PC-9 (cell line): ENCODE measurements at regions of chr10 and their contacts with region 1.

Region 1: GRCh38 chr10:21432271-21432670 is 93.2 kb downstream of the SKIDA1 start:
- DNase-seq: peak; percentile 57 to 81
- H3K4me3 ChIP-seq: no peak overlapping the region
- H3K27ac ChIP-seq: peak overlapping the region; percentile 82
- H3K4me1 ChIP-seq: peaks cover 22% of the 10 kb centered on the region
- H3K27me3 ChIP-seq: no peaks in the 10 kb centered on the region
- CTCF ChIP-seq: no peak

Region 2: DNA sequence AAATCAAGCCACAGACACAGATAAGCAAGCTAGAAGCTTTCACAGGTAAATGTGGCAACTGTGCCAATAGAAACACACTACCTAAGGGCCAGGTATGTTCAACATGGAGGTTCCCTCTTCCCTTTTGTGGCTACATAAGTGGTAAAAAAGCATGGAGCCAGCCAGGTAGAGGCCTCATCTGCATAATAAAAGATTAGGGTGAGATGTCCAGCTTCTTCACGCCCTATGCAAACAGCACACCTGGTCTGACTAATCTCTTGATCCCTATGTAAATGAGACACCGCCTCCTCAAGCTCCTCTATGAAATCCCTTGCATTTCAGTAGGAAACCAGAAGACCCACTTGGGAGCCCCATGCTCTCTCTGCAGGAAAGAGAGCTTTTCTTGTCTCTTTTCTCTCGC is 817.4 kb before region 1 on chr10:
- CTCF ChIA-PET with region 1: no interaction called
- POLR2A ChIA-PET with region 1: no interaction called
- intact Hi-C with region 1: no loop called
- DNase-seq: no peak
- H3K4me3 ChIP-seq: no peak overlapping the region
- H3K27ac ChIP-seq: no peak overlapping the region
- H3K4me1 ChIP-seq: no peaks in the 10 kb centered on the region
- H3K27me3 ChIP-seq: peaks cover 11% of the 10 kb centered on the region; the same call in 1 of the 2 replicates
- CTCF ChIP-seq: no peak

Region 3: DNA sequence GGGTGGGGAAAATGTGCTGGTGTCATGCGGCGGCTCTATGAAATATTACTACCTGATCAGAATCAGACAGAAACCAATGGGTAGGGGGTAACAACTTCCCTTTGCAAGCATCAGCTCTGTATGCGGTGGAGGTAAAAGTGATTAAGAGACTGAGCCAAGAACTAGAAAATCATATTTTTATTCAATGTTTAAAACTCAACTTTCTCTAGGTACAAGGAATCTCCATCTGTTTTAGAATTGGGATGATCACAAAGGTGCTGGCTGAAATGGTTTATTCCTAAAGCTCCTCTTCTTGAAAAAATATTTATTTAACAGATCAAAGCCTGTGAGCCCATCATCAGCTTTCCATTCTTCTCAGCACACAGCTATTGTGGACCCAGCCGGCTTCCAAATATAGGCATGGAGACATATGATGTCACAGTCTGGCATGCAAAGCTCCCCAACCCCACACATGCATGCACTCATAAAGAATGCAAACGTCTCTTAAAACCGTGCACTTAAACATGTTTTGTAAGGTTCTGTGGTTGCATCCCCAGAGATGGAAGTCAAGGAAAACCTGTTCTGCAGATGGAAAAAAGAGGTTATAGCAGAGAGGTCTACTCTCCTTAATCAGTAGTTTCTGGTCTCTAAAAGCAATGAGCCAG is 32.8 kb before region 1 on chr10:
- CTCF ChIA-PET with region 1: no interaction called
- POLR2A ChIA-PET with region 1: no interaction called
- intact Hi-C with region 1: loop called (anchors 2 kb)
- DNase-seq: peak; percentile 44 to 66
- H3K4me3 ChIP-seq: no peak overlapping the region
- H3K27ac ChIP-seq: peak overlapping the region; percentile 45; the same call in 1 of the 2 replicates
- H3K4me1 ChIP-seq: peaks cover 22% of the 10 kb centered on the region
- H3K27me3 ChIP-seq: no peaks in the 10 kb centered on the region
- CTCF ChIP-seq: no peak